PC-3 (cell line): ENCODE measurements at regions of chrX and their contacts with region 1.

Region 1: DNA sequence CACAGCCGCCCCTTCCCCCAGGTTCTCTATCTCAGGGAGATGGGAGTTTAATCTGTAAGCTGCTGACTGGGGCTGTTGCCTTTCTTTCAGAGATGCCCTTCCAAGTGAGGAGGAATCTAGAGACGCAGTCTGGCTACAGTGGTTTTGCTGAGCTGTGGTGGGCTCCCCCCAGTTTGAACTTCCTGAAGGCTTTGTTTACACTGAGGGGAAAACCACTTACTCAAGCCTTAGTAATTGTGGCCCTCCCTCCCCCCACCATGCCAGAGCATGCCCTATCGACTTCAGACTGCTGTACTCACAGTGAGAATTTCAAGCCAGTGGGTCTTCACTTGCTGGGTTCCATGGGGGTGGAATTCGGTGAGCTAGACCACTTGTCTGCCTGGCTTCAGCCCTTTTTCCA is 131.3 kb downstream of the FAAH2 start:
- DNase-seq: peak; percentile 11
- ATAC-seq: peak; percentile 59; the same call in 1 of the 2 replicates
- H3K4me3 ChIP-seq: no peak overlapping the region
- H3K27ac ChIP-seq: no peak overlapping the region
- H3K4me1 ChIP-seq: no peaks in the 10 kb centered on the region
- H3K27me3 ChIP-seq: no peaks in the 10 kb centered on the region
- CTCF ChIP-seq: no peak

Region 2: DNA sequence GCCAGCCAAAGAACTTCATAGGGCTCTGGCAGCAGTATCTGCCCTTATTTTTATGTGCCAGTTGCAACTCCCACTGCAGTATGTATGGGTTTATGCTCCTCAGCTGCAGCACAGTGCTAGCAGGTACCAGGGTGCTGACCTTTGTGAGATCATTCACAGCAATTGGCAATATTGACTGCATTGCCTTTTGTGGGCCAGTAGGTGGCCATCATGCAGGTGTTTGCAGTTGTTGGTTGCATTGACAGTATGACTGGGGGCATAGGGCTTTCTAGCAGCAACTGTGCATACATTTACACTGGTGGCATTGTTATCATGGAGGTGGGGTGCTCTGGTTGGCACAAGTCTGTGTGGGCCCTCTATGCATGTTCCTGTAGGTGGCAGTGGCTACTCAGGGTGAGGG is 88.8 kb before region 1 on chrX:
- CTCF ChIA-PET with region 1: no interaction called
- POLR2A ChIA-PET with region 1: no interaction called
- intact Hi-C with region 1: no loop called
- DNase-seq: peak; percentile 5
- ATAC-seq: no peak
- H3K4me3 ChIP-seq: no peak overlapping the region
- H3K27ac ChIP-seq: no peak overlapping the region
- H3K4me1 ChIP-seq: no peaks in the 10 kb centered on the region
- H3K27me3 ChIP-seq: no peaks in the 10 kb centered on the region
- CTCF ChIP-seq: peak; percentile 48; the same call in 1 of the 2 replicates

Region 3: DNA sequence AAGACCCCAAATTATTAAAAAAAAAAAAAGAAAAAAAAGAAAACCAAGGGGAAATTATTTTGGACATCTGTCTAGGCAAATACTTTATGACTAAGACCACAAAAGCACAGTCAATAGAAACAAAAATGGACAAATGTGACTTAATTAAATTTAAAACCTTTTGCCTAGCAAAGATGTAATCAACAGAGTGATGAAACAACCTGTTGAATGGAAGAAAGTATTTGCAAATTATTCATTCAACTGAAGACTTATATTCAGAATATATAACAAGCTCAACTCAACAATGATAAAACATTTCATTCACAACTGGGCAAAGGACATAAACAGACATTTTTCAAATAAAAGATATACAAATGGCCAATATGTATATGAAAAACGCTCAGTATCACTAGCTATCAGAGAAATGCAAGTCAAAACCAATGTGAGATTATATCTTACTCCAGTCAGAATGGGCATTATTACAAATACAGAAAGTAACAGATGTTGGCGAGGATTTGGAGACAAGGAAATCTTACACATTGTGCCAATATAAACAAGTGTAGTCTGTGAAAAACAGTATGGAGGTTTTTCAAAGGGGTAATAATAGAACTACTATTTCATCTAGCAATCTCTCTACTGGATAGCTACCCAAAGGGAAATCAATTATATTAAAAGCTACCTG is 64.2 kb before region 1 on chrX:
- CTCF ChIA-PET with region 1: no interaction called
- POLR2A ChIA-PET with region 1: no interaction called
- intact Hi-C with region 1: loop called (anchors 10 kb)
- DNase-seq: no peak
- ATAC-seq: no peak
- H3K4me3 ChIP-seq: no peak overlapping the region
- H3K27ac ChIP-seq: no peak overlapping the region
- H3K4me1 ChIP-seq: no peaks in the 10 kb centered on the region
- H3K27me3 ChIP-seq: no peaks in the 10 kb centered on the region
- CTCF ChIP-seq: no peak

Region 4: DNA sequence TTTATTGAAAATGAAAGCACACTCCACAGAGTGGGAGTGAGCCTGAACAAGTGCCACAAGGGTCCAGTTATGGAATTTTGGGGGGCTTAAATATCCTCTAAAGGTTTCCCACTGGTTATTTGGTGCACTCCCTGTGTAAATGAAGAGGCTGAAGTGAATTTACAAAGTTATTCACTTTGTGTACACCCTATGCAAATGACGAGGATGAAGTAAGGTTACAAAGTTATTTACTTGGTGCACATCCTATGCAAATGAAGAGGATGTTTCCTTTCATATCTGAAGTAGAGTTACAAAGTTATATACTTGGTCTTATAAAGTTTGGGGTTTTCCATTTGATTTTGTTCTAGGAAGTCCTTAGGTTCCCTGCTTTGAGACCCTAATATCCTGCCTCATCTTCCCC is 249.2 kb after region 1 on chrX:
- CTCF ChIA-PET with region 1: no interaction called
- POLR2A ChIA-PET with region 1: no interaction called
- intact Hi-C with region 1: no loop called
- DNase-seq: no peak
- ATAC-seq: no peak
- H3K4me3 ChIP-seq: no peak overlapping the region
- H3K27ac ChIP-seq: no peak overlapping the region
- H3K4me1 ChIP-seq: no peaks in the 10 kb centered on the region
- H3K27me3 ChIP-seq: no peaks in the 10 kb centered on the region
- CTCF ChIP-seq: no peak